K562 (cell line): ENCODE measurements at regions of chr10 and their contacts with region 1.

Region 1: GRCh38 chr10:77756319-77757232 is 119.0 kb upstream of the KCNMA1 start:
- DNase-seq: peak; percentile 51 to 80 (median 64)
- ATAC-seq: peak; percentile 99
- H3K4me3 ChIP-seq: no peak overlapping the region
- H3K27ac ChIP-seq: no peak overlapping the region
- H3K4me1 ChIP-seq: no peaks in the 10 kb centered on the region
- H3K27me3 ChIP-seq: no peaks in the 10 kb centered on the region; a peak in 1 of 5 replicates
- CTCF ChIP-seq: peak; percentile 90 to 95 (median 91)
- EP300 ChIP-seq: no peak
- POLR2A ChIP-seq: no peak
- RAD21 ChIP-seq: peak; percentile 71 to 89

Region 2: GRCh38 chr10:77165445-77166208 is 590.9 kb before region 1 on chr10:
- CTCF ChIA-PET with region 1: no interaction called
- POLR2A ChIA-PET with region 1: no interaction called
- in situ Hi-C with region 1: no loop called
- intact Hi-C with region 1: loop called (anchors 2 kb)
- DNase-seq: peak; percentile 49 to 69 (median 56)
- ATAC-seq: peak; percentile 94
- H3K4me3 ChIP-seq: no peak overlapping the region
- H3K27ac ChIP-seq: no peak overlapping the region
- H3K4me1 ChIP-seq: no peaks in the 10 kb centered on the region
- H3K27me3 ChIP-seq: no peaks in the 10 kb centered on the region
- CTCF ChIP-seq: peak; percentile 75 to 85 (median 80)
- EP300 ChIP-seq: no peak
- POLR2A ChIP-seq: no peak
- RAD21 ChIP-seq: peak; percentile 57 to 79

Region 3: GRCh38 chr10:77173615-77174461 is 582.7 kb before region 1 on chr10:
- CTCF ChIA-PET with region 1: interaction called, 11 read pairs
- POLR2A ChIA-PET with region 1: no interaction called
- in situ Hi-C with region 1: no loop called
- intact Hi-C with region 1: loop called (anchors 2 kb)
- DNase-seq: peak; percentile 78 to 83 (median 81)
- ATAC-seq: peak; percentile 95
- H3K4me3 ChIP-seq: no peak overlapping the region
- H3K27ac ChIP-seq: no peak overlapping the region
- H3K4me1 ChIP-seq: no peaks in the 10 kb centered on the region
- H3K27me3 ChIP-seq: peaks cover 3 to 5% of the 10 kb centered on the region in 2 experiments; a peak in 3 of 5 replicates
- CTCF ChIP-seq: peak; percentile 90 to 96 (median 93)
- EP300 ChIP-seq: no peak
- POLR2A ChIP-seq: no peak
- RAD21 ChIP-seq: peak; percentile 77 to 87

Region 4: DNA sequence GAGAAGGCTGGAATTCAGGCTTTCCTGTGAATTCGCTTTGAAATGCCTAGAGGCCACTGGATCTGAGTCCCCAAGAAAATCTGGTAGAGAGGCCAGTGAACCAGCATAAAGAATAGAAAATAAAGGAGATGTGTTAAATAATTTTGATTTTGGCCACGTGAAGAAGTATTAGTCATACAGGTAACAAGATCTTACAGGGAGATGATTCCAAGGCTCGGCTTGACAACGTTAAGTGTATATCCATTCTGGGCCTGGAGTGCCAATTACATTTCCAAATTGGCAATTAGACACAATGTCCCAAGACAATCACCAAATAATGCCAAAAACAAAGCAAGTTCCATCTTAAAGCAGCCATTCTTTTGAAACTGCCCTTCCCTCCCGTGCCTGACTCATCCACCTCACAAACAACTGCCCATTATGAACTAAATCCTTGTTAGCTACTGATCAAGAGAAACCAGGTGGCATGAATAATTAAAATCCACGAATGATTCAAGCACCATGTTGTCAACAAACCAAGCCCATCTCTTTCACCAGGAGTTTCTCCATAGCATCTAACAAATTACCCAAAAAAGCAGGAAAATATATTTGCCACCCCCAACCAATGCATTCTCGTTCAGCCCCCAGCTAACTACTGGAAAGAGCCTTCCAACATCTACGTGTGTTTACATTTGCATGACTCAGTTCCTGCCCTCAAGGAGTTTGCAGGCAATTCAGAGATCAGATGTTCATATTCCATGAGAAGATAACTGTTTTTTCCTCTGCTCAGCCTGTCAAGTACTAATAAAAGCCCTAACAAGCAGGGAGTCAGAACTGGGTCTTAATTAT is 127.5 kb before region 1 on chr10:
- CTCF ChIA-PET with region 1: no interaction called
- POLR2A ChIA-PET with region 1: no interaction called
- in situ Hi-C with region 1: no loop called
- intact Hi-C with region 1: no loop called
- DNase-seq: no peak
- ATAC-seq: no peak
- H3K4me3 ChIP-seq: no peak overlapping the region
- H3K27ac ChIP-seq: no peak overlapping the region
- H3K4me1 ChIP-seq: no peaks in the 10 kb centered on the region
- H3K27me3 ChIP-seq: peaks cover 4 to 9% of the 10 kb centered on the region in 2 experiments; a peak in 3 of 5 replicates
- CTCF ChIP-seq: no peak
- EP300 ChIP-seq: no peak
- POLR2A ChIP-seq: no peak
- RAD21 ChIP-seq: no peak

Region 5: GRCh38 chr10:77673101-77673500 is 83.5 kb before region 1 on chr10:
- CTCF ChIA-PET with region 1: no interaction called
- POLR2A ChIA-PET with region 1: no interaction called
- in situ Hi-C with region 1: no loop called
- intact Hi-C with region 1: no loop called
- DNase-seq: peak in 2 of 4 experiments; percentile 20 to 28
- ATAC-seq: peak; percentile 69
- H3K4me3 ChIP-seq: no peak overlapping the region
- H3K27ac ChIP-seq: no peak overlapping the region
- H3K4me1 ChIP-seq: no peaks in the 10 kb centered on the region; a peak in 1 of 5 replicates
- H3K27me3 ChIP-seq: no peaks in the 10 kb centered on the region; a peak in 1 of 5 replicates
- CTCF ChIP-seq: no peak
- EP300 ChIP-seq: no peak; the same call in 1 of the 2 replicates
- POLR2A ChIP-seq: no peak
- RAD21 ChIP-seq: no peak

Region 6: GRCh38 chr10:77710759-77711682 is 45.6 kb before region 1 on chr10:
- CTCF ChIA-PET with region 1: interaction called, 6 read pairs
- POLR2A ChIA-PET with region 1: interaction called, 3 read pairs
- in situ Hi-C with region 1: no loop called
- intact Hi-C with region 1: loop called (anchors 1 kb)
- DNase-seq: peak; percentile 76 to 93 (median 88)
- ATAC-seq: peak; percentile 98
- H3K4me3 ChIP-seq: no peak overlapping the region
- H3K27ac ChIP-seq: no peak overlapping the region
- H3K4me1 ChIP-seq: peaks cover 3 to 8% of the 10 kb centered on the region in 2 experiments; a peak in 3 of 5 replicates
- H3K27me3 ChIP-seq: peaks cover 2 to 36% of the 10 kb centered on the region in 2 experiments; a peak in 3 of 5 replicates
- CTCF ChIP-seq: peak; percentile 93 to 97 (median 96)
- EP300 ChIP-seq: no peak
- POLR2A ChIP-seq: no peak
- RAD21 ChIP-seq: peak; percentile 64 to 85

Region 7: DNA sequence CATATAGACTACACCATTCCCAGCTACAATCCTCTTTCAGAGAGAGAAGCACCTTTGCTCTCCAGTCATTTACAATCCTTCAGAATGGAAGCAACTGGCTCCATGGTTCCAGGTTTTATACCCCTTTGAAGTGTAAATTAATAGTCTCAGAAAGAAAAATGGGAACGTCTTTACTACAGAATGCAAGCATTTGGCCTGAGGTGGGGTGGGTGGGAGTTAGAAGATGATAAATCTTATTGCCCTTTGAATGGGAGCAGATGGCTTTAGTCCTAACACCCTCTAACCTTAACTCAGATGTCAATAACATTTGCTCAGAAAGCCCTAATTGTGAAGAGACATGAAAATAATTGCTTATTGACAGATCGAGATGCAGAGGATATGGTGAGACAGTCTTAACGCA is 34.8 kb before region 1 on chr10:
- CTCF ChIA-PET with region 1: interaction called, 10 read pairs
- POLR2A ChIA-PET with region 1: no interaction called
- in situ Hi-C with region 1: no loop called
- intact Hi-C with region 1: loop called (anchors 1 kb)
- DNase-seq: no peak
- ATAC-seq: no peak
- H3K4me3 ChIP-seq: no peak overlapping the region
- H3K27ac ChIP-seq: no peak overlapping the region
- H3K4me1 ChIP-seq: no peaks in the 10 kb centered on the region
- H3K27me3 ChIP-seq: 0 out of 5 replicates have a peak, but pooled peaks cover 0 to 4% of the 10 kb centered on the region in 2 experiments
- CTCF ChIP-seq: no peak
- EP300 ChIP-seq: no peak
- POLR2A ChIP-seq: no peak
- RAD21 ChIP-seq: no peak